Activated CD4-positive, alpha-beta T cell treated with anti-CD3 and anti-CD28 coated beads for 36 hours (primary cell): ENCODE measurements at regions of chr6 and their contacts with region 1.

Region 1: GRCh38 chr6:163413345-163414116 is 987 bp upstream of the QKI start:
- DNase-seq: peak; percentile 92
- ATAC-seq: peak; percentile 71
- H3K4me3 Mint-ChIP-seq: peak overlapping the region; percentile 78
- H3K27ac Mint-ChIP-seq: peak overlapping the region; percentile 84
- H3K4me1 Mint-ChIP-seq: peaks cover 18% of the 10 kb centered on the region
- H3K27me3 Mint-ChIP-seq: no peaks in the 10 kb centered on the region

Region 2: DNA sequence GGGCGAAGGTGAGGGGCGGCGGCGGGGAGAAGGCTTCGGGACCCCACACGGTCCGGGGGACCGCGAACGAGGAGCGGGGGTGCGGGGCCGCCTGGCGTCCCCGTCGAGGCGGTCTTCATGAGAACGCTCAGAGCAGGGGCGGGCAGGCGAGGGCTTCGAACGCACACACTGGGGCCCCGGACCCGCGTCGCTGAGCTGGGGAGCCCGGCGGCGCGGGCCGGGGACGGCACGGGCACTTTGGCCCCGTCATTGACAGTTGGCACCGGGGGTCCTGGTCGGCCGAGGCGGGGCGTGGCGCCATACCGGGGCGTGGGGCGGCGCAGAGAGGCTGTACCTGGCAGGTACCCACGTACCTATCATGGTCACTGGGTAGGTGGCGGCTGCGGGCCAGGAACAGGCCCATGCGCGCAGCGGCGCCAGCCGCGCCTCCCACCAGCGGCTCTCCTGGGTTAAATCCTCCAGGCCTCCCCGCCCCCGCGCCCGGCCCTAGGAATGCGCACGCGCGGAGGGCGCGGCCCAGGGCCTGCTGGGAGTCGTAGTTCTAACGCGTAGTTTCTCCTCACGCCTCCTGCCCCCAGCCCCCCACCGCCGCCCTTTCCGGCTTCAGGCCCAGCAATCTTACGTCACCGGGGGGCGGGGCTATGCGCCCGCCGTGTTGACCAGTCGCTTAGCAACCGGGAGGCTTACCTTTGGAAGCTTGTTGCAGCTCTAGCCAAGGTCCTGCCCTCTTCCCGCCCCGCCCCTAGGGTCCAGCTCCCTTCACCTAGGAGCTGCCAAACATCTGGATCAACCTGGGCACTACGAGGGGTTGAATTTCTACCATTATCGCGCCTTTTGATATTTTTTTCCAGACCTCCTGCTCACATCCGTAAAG is 686.0 kb before region 1 on chr6 and contains the starts of genes PACRG and PRKN:
- CTCF ChIA-PET with region 1: no interaction called
- POLR2A ChIA-PET with region 1: no interaction called
- intact Hi-C with region 1: loop called in 1 of 2 experiments (anchors 5 kb)
- DNase-seq: peak; percentile 99
- ATAC-seq: peak; percentile 97
- H3K4me3 Mint-ChIP-seq: peak within 1 kb of the TSS; percentile 77
- H3K27ac Mint-ChIP-seq: peak within 1 kb of the TSS; percentile 84
- H3K4me1 Mint-ChIP-seq: peaks cover 11% of the 10 kb centered on the region
- H3K27me3 Mint-ChIP-seq: no peaks in the 10 kb centered on the region
- total RNA-seq, gene PACRG: not detected
- total RNA-seq, gene PRKN: 0.56 to 0.87 TPM

Region 3: DNA sequence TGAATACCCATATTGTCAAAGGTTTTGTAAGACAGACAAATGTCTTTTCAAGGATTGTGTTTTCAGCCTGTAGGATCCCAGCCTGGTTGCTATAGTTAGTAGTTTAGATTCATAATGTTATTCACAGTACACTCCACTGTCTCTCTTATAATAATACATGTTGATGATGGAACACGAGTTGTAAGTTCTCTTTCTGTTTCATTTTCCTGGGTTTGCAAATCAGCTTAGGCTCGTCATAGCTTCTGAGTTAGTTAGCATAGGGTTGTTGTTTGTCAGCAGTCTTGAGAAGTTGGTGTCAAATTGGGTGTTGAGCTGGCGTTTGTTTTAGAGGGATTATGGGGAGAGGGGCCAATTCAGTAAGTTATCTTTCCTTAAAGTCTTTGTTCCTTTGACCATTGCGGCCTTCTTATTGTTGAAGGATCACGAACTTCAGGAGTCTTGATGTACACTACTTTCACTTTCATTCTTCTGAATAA is 46.8 kb after region 1 on chr6:
- CTCF ChIA-PET with region 1: interaction called, 3 read pairs
- POLR2A ChIA-PET with region 1: interaction called, 3 read pairs
- intact Hi-C with region 1: loop called (anchors 1 to 2 kb)
- DNase-seq: peak; percentile 23
- ATAC-seq: peak; percentile 90
- H3K4me3 Mint-ChIP-seq: peak overlapping the region; percentile 82
- H3K27ac Mint-ChIP-seq: peak overlapping the region; percentile 96
- H3K4me1 Mint-ChIP-seq: peaks cover 60% of the 10 kb centered on the region
- H3K27me3 Mint-ChIP-seq: no peaks in the 10 kb centered on the region

Region 4: DNA sequence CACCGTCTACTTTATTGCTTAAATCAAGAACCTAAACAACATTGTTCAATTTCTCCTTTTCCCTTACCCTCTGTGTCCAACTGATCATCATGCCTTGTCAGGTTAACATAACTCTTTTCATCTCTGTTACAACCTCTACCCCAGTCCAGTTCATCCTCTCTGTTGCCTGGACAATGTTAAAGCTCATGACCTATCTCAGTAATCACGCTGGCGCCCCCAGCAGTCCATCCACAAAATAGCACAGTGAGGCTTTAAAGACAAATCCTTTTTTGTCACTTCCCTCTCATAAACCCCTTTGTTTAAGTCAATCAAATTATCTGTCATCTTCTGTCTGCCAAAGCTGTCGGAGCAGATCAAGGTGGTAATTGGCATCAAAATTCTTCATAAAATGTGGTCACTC is 141.1 kb after region 1 on chr6:
- CTCF ChIA-PET with region 1: interaction called, 8 read pairs
- POLR2A ChIA-PET with region 1: no interaction called
- intact Hi-C with region 1: loop called (anchors 1 kb)
- DNase-seq: peak; percentile 81
- ATAC-seq: peak; percentile 78
- H3K4me3 Mint-ChIP-seq: no peak overlapping the region
- H3K27ac Mint-ChIP-seq: no peak overlapping the region
- H3K4me1 Mint-ChIP-seq: peaks cover 7% of the 10 kb centered on the region
- H3K27me3 Mint-ChIP-seq: no peaks in the 10 kb centered on the region

Region 5: GRCh38 chr6:164927288-164928056 is 1513.9 kb after region 1 on chr6:
- CTCF ChIA-PET with region 1: no interaction called
- POLR2A ChIA-PET with region 1: no interaction called
- intact Hi-C with region 1: loop called (anchors 2 to 10 kb)
- DNase-seq: peak; percentile 78
- ATAC-seq: peak; percentile 60
- H3K4me3 Mint-ChIP-seq: no peak overlapping the region
- H3K27ac Mint-ChIP-seq: no peak overlapping the region
- H3K4me1 Mint-ChIP-seq: no peaks in the 10 kb centered on the region
- H3K27me3 Mint-ChIP-seq: no peaks in the 10 kb centered on the region